Activated T-helper 1 cell treated with anti-CD3 and anti-CD28 coated beads, Interleukin-12 subunit alpha, Interleukin-12 subunit beta, Interleukin-2, Interleukin-4 antibody, amounts not matched to agents 30 ng/mL and 10 ng/mL and 1 ng/mL, durations not matched to agents 14 hours and 24 hours and 36 hours (primary cell): ENCODE measurements at regions of chr11 and their contacts with region 1.

Region 1: GRCh38 chr11:57530596-57531507 is at the start of gene TIMM10:
- DNase-seq: peak; percentile 92
- H3K4me3 Mint-ChIP-seq: peak within 1 kb of the TSS; percentile 87
- H3K27ac Mint-ChIP-seq: peak within 1 kb of the TSS; percentile 87
- H3K4me1 Mint-ChIP-seq: peaks cover 32% of the 10 kb centered on the region
- H3K27me3 Mint-ChIP-seq: no peaks in the 10 kb centered on the region
- total RNA-seq, gene TIMM10: 98.2 and 99.6 TPM in 2 replicates

Region 2: GRCh38 chr11:57324886-57325734 is 205.7 kb before region 1 on chr11 and contains the start of gene TNKS1BP1:
- intact Hi-C with region 1: loop called (anchors 1 kb)
- DNase-seq: peak; percentile 86
- H3K4me3 Mint-ChIP-seq: peak within 1 kb of the TSS; percentile 85
- H3K27ac Mint-ChIP-seq: peak within 1 kb of the TSS; percentile 91
- H3K4me1 Mint-ChIP-seq: peaks cover 57% of the 10 kb centered on the region
- H3K27me3 Mint-ChIP-seq: no peaks in the 10 kb centered on the region
- total RNA-seq, gene TNKS1BP1: 22.1 and 24.3 TPM in 2 replicates

Region 3: DNA sequence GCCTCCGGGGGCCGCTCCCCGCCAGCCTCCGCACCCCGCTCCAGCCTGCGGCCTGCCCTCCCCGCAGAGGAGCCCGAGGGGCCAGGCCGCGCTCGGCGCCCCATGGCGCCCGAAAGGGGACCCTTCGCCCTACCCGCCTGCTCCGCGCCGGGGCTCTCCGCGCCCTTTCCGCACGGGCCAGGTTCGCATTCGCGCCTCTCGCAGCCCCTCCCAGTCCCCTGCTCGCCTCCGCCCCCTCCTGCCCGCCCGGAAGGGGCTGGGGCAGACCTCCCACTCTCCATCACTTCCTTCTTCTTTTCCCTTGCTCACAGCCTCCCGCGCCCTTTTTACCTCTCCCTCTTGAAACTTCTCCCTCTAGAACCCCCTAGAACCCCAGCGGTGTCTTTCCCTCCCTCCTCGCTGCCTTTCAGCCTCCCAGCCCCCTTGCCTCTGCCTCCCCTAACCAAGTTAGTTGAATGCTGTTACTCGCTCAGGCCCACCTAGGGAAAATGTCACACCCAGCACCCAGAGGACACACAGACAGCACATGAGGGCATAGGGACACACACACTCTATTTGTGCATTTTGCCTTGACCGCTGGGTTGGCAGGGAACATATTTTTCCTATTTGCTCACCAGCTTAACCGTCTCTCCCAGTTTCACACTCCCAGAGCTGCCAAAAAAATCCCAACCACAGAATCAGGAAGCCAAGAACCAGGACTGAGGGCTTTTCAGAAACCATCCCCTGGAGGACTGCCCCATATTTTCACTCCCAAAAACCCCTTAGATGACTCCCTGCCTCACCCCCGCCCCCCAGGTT is 103.7 kb before region 1 on chr11 and contains the start of gene SLC43A3:
- intact Hi-C with region 1: loop called (anchors 1 kb)
- DNase-seq: peak; percentile 60
- H3K4me3 Mint-ChIP-seq: peak within 1 kb of the TSS; percentile 90
- H3K27ac Mint-ChIP-seq: peak within 1 kb of the TSS; percentile 80
- H3K4me1 Mint-ChIP-seq: peaks cover 56% of the 10 kb centered on the region
- H3K27me3 Mint-ChIP-seq: peaks cover 3% of the 10 kb centered on the region
- total RNA-seq, gene SLC43A3: 181 and 184 TPM in 2 replicates

Region 4: DNA sequence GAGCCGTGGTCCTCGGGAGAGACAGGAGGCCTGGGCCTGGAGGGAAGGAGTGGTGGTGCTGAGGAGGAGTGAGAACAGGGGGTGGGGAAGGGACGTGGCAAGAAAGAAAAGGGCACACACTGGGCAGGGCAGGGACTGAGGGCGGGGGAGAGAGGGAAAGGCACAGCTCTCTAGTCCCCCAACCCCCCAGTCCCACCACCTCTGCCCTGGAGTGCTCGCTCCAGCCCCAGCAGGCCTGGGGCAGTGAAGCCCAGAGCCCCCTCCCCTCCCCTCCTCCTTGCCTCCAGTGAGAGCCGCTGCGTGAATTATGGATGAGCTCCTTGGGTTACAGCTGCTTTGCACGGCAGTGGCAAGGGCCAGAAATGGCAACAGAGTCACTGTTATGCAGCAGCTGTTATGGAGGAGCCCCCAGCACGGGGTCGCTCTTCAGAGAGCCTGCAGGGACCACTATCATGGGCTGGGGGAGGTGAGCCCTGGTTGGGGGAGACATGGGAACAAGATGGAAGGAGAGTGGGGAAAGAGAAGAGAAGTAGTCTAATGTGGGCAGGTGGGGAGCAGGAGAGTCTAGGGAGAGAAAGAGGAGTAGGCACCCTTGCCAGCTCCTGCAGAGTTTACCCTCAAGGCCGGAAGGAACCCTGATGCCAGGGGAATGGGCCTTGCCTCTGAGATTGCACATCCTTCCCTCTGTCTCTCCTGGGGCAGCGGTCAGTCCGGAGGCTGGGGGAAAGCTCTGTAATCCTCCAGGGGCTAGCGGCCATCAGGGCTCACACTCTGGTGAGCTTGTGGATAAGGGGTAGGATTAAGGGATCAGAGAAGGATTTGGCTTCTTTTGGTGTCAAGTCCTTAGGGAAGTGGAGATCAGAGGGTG is 66.9 kb before region 1 on chr11:
- intact Hi-C with region 1: no loop called
- DNase-seq: no peak
- H3K4me3 Mint-ChIP-seq: no peak overlapping the region
- H3K27ac Mint-ChIP-seq: no peak overlapping the region
- H3K4me1 Mint-ChIP-seq: peaks cover 23% of the 10 kb centered on the region
- H3K27me3 Mint-ChIP-seq: peaks cover 38% of the 10 kb centered on the region

Region 5: DNA sequence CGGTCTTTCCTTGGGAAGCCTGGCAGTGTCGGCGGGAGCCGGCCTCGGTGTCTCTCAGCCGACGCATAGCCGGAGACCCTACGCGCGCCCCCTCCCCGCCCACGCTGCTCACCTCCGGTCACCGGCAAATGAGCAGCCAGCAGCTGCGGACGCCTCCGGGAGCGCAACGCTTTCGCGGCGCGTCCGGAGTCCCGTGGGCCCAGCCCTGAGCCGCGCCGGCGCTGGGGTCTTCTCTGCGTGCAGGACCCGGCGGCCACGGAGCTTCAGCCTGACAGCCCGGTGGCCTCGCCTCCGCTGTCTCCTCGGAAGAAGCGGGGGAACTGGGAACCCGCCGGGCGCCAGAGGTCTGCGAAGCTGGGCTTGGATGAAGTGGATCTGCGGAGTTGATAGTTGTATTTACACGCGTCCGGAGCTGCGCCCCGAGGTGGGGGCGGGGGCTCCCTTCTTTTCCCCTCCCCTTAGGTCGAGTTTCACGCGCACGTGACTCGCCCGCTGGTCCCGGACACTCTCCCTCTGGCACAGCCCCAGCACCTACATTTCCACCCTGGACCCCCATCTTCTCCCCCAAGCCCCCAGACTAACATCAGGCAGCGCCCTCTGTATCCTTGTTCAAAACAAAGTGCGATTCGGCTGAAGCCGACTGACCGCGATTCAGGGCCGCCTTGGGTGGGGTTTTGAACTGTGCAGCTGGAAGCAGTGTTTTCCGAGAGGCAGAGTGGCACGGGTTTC is 15.4 kb before region 1 on chr11 and contains the start of gene SLC43A1:
- intact Hi-C with region 1: loop called (anchors 1 kb)
- DNase-seq: peak; percentile 9
- H3K4me3 Mint-ChIP-seq: peak within 1 kb of the TSS; percentile 99
- H3K27ac Mint-ChIP-seq: peak within 1 kb of the TSS; percentile 94
- H3K4me1 Mint-ChIP-seq: peaks cover 17% of the 10 kb centered on the region
- H3K27me3 Mint-ChIP-seq: peaks cover 4% of the 10 kb centered on the region
- total RNA-seq, gene SLC43A1: 29.1 and 30.3 TPM in 2 replicates

Region 6: GRCh38 chr11:57657194-57658022 is 126.6 kb after region 1 on chr11 and contains the start of gene CLP1:
- intact Hi-C with region 1: loop called (anchors 1 kb)
- DNase-seq: peak; percentile 99
- H3K4me3 Mint-ChIP-seq: peak within 1 kb of the TSS; percentile 96
- H3K27ac Mint-ChIP-seq: peak within 1 kb of the TSS; percentile 95
- H3K4me1 Mint-ChIP-seq: peaks cover 18% of the 10 kb centered on the region
- H3K27me3 Mint-ChIP-seq: no peaks in the 10 kb centered on the region
- total RNA-seq, gene CLP1: 17.8 and 19.1 TPM in 2 replicates

Region 7: GRCh38 chr11:57741132-57742086 is 210.6 kb after region 1 on chr11 and contains the start of gene SELENOH:
- intact Hi-C with region 1: loop called (anchors 1 kb)
- DNase-seq: peak; percentile 93
- H3K4me3 Mint-ChIP-seq: peak within 1 kb of the TSS; percentile 98
- H3K27ac Mint-ChIP-seq: peak within 1 kb of the TSS; percentile 95
- H3K4me1 Mint-ChIP-seq: peaks cover 46% of the 10 kb centered on the region
- H3K27me3 Mint-ChIP-seq: no peaks in the 10 kb centered on the region
- total RNA-seq, gene SELENOH: 211 and 232 TPM in 2 replicates